Ascending aorta (tissue), 2 donors: ENCODE measurements at regions of chr1 and their contacts with region 1.

Region 1: DNA sequence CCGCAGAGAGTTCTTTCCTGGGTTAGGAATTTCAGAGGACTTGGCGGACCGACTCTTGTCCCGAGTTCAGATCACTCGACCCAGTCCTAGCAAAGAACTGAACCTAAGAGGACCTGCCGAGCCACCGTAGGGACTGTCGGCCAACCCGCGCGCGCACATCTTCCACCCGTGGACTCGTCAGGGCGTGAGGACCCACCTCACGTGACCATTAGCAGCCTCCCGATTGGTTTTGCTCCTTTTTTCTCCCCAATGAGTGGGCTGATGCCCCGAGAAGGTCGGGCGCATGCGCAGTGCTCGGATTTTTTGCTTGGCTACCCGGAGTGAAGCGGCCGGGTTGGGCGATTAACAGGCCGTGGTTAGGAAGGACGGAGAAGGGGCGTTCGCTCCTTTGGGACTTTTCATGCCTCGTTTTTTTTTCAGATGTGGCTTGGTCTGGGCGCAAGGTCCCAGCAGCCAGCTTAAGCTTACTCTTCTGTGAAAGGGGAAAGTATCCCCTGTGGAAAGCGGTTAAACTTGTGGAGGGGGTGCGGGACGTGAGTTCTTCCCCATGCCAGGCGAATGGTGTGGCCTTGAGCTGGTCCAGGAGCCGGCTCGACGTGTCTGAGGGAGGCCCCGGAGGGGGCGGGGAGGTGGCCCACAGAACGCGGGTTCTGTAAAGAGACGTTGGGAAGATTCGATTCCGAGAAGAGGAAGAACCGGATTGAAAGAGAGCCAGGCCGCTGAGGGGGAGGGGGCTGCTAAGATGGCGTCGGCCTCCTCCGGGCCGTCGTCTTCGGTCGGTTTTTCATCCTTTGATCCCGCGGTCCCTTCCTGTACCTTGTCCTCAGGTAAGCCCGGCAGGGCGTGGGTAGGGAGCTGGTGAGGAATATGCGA is at the start of gene PIP5K1A:
- DNase-seq: peak; percentile 95 to 99
- H3K4me3 ChIP-seq: peak within 1 kb of the TSS; percentile 74 to 82
- H3K27ac ChIP-seq: peak within 1 kb of the TSS; percentile 84 to 85
- H3K4me1 ChIP-seq: peaks cover 5 to 23% of the 10 kb centered on the region in 2 donors
- H3K27me3 ChIP-seq: no peaks in the 10 kb centered on the region
- CTCF ChIP-seq: no peak
- total RNA-seq, gene PIP5K1A: 36.5 TPM

Region 2: DNA sequence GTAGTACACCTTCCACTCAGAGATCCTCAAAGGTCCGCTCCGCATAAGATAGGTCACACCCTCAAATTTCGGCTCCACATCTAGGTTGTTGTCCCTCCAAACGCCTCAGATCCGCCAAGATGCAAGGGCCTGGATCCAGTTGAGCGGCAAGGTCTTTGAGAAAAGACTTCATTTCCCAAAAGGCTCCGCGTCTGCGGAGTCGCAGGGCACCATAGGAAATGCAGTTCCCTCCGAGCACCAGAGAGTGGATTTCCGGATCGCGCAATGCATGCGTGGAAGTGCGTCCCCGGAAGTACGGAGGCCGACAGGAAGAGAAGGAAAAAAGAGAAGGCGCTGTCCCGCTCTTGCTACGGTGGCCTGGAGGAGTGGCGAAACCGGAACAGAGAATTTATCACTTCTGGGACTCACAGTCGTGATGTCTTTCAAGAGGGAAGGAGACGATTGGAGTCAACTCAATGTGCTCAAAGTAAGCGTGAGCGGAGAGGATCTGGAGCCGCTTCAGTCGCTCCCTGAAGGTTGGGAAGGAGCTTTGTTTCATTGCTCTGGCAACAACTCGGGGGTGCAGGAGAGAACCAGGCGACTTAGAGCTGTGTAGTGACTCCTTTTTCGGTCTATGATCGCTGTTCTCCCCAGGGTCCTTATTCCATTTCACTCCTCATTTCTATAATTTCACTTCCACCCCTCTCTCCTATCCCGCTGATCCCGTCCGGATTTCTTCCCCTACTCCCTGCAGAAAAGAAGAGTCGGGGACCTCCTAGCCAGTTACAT is 32.6 kb before region 1 on chr1 and contains the starts of genes LYSMD1 and SCNM1:
- intact Hi-C with region 1: loop called (anchors 2 kb)
- DNase-seq: peak; percentile 91 to 99
- H3K4me3 ChIP-seq: peak within 1 kb of the TSS; percentile 65 to 71
- H3K27ac ChIP-seq: peak within 1 kb of the TSS; percentile 77 to 86
- H3K4me1 ChIP-seq: peaks cover 10 to 23% of the 10 kb centered on the region in 2 donors
- H3K27me3 ChIP-seq: no peaks in the 10 kb centered on the region
- CTCF ChIP-seq: no peak
- total RNA-seq, gene LYSMD1: 0.85 TPM
- total RNA-seq, gene SCNM1: 27.4 TPM

Region 3: GRCh38 chr1:151254217-151255213 is 56.0 kb after region 1 on chr1 and contains the start of gene PSMD4:
- intact Hi-C with region 1: loop called (anchors 1 kb)
- DNase-seq: peak; percentile 79 to 97
- H3K4me3 ChIP-seq: peak within 1 kb of the TSS; percentile 81 to 82
- H3K27ac ChIP-seq: peak within 1 kb of the TSS; percentile 88 to 89
- H3K4me1 ChIP-seq: peaks cover 0 to 7% of the 10 kb centered on the region in 2 donors
- H3K27me3 ChIP-seq: no peaks in the 10 kb centered on the region
- CTCF ChIP-seq: no peak
- total RNA-seq, gene PSMD4: 83.5 TPM